Esophagus muscularis mucosa (tissue), 4 donors: ENCODE measurements at regions of chr4 and their contacts with region 1.

Region 1: GRCh38 chr4:173990126-173990868 is 293.2 kb downstream of the FBXO8 start:
- DNase-seq: no peak
- H3K4me3 ChIP-seq: no peak overlapping the region
- H3K27ac ChIP-seq: peak overlapping the region; percentile 30 to 57 (median 40)
- H3K4me1 ChIP-seq: peaks cover 0 to 22% (median 21%) of the 10 kb centered on the region in 4 donors
- H3K27me3 ChIP-seq: no peaks in the 10 kb centered on the region
- CTCF ChIP-seq: peak; percentile 62 to 73 (median 66)
- EP300 ChIP-seq: no peak
- POLR2A ChIP-seq: no peak

Region 2: GRCh38 chr4:173505924-173506518 is 484.3 kb before region 1 on chr4:
- intact Hi-C with region 1: loop called (anchors 5 kb)
- DNase-seq: peak; percentile 92
- H3K4me3 ChIP-seq: peak overlapping the region in 2 of 4 donors; percentile 20 to 41
- H3K27ac ChIP-seq: peak overlapping the region in 2 of 4 donors; percentile 34 to 43
- H3K4me1 ChIP-seq: peaks cover 17 to 64% (median 57%) of the 10 kb centered on the region in 4 donors
- H3K27me3 ChIP-seq: peaks cover 0 to 69% (median 0%) of the 10 kb centered on the region in 4 donors
- CTCF ChIP-seq: peak; percentile 73 to 83 (median 82)
- EP300 ChIP-seq: no peak
- POLR2A ChIP-seq: no peak

Region 3: DNA sequence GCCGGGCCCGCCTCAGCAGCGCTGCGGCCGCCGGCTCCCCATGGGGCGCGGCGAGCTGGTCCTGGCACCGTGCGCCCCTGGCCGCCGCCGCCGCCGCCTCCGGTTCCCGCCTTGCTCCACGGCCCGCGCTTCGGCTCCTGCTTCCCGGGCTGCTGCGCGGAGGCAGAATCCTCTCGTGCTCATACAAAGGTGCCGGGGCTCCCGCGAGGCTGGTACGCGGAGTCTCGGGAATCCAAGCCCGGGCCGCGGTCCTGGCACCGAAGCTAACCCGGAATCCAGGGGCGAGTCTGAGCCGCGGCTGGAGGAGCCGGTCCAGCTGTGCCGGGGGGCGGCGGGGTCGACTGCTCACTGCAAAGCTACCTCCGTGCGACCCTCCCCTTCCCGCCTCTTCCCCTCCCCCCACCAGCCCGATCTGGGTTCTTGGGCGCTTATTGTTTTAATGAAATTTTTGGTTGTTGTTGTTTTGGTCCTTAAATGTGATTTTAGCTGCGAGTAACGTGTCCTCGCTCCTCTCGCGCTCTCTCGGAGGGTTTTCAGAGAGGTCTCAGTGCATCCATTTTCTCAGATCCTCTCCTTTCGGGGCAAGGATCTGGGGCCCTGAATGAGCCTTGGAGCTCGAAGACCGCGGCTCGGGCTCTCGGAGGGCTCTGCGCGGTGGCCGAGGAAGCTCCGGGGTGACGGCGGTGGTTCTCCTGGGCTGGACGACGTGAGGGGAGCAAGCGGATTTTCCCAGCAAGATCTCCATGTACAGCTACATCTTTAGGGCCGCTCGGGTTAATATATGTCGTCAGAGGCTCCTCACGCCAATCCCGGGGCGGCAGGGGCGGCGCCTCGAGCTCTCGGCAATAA is 460.6 kb before region 1 on chr4 and contains the start of gene HAND2:
- intact Hi-C with region 1: loop called (anchors 10 kb)
- DNase-seq: no peak
- H3K4me3 ChIP-seq: peak within 1 kb of the TSS; percentile 82 to 90 (median 88)
- H3K27ac ChIP-seq: peak within 1 kb of the TSS; percentile 96 to 98 (median 98)
- H3K4me1 ChIP-seq: peaks cover 3 to 58% (median 38%) of the 10 kb centered on the region in 4 donors
- H3K27me3 ChIP-seq: peaks cover 0 to 54% (median 2%) of the 10 kb centered on the region in 4 donors
- CTCF ChIP-seq: no peak
- EP300 ChIP-seq: no peak
- POLR2A ChIP-seq: peak; percentile 81
- total RNA-seq, gene HAND2: 77.7 to 165 (median 138) TPM

Region 4: GRCh38 chr4:173758132-173758531 is 232.2 kb before region 1 on chr4:
- intact Hi-C with region 1: loop called (anchors 5 kb)
- DNase-seq: no peak
- H3K4me3 ChIP-seq: no peak overlapping the region
- H3K27ac ChIP-seq: no peak overlapping the region
- H3K4me1 ChIP-seq: peaks cover 3 to 21% (median 12%) of the 10 kb centered on the region in 4 donors
- H3K27me3 ChIP-seq: no peaks in the 10 kb centered on the region
- CTCF ChIP-seq: no peak
- EP300 ChIP-seq: no peak
- POLR2A ChIP-seq: no peak

Region 5: DNA sequence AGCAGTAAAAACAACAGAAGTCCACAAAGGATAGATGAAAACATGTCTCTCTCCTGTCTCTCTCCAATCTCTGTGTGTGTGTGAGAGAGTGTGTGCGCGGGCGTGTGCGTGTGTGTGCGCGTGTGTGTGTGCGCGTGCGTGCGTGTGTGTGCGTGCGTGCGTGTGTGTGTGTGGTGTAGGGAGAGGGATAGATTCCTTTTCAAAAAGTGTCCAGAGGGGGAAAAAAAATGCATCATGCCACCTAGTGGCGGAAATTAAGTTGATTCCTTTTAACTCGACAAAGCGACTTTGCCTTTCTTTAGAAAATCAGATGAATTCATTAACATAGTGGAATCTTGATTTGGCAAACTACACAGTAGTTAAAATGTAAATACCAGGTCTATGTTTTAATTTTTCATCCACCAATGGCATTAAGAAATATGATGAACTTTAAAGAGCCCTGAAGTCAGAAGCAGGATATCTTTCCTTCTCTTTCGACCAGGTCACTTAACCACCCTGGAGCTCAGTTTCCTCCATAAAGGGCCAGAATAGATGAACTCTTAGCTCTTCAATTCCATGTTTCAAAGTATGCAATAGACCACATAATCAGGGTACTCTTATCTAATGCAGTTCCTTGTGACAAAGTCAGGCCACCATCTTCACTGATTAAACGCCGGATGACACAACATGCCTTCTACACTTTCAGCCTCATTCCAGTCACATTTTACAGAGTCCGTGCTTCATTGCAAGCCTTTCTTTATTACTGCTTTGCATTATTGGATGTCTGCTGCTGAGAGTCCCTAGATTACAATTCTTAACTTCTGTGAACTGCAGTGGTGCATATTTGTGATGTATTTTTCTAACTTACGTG is 130.4 kb after region 1 on chr4:
- intact Hi-C with region 1: loop called (anchors 5 kb)
- DNase-seq: no peak
- H3K4me3 ChIP-seq: peak overlapping the region; percentile 45 to 58 (median 56)
- H3K27ac ChIP-seq: peak overlapping the region; percentile 67 to 77 (median 75)
- H3K4me1 ChIP-seq: peaks cover 12 to 48% (median 44%) of the 10 kb centered on the region in 4 donors
- H3K27me3 ChIP-seq: no peaks in the 10 kb centered on the region
- CTCF ChIP-seq: peak; percentile 60 to 66 (median 65)
- EP300 ChIP-seq: no peak
- POLR2A ChIP-seq: no peak

Region 6: DNA sequence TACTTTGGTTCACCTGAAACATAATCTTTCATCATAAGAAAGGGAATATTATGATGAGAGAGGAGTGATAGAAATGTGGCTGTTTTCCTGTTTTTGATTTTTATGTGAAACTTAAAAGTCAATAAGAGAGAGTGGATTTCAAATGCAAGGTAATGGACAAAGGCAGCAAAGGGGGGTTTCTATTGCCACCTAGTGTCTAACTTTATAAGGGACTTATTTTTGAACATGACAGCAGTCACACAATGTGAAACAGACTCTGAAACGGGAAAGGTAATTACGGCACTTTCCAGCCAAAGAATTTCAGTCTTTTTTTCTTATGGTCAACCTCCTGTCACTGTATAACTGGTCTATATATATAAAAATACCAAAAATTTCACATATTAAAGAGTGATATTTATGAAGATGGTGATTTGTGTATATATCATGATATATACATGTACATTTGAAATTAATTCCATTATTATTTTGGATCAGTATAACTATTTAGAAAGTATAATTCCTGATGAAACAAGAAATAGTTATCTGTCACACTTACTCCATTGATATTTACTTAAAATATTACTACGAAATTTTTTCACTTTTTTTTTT is 166.0 kb after region 1 on chr4:
- intact Hi-C with region 1: loop called (anchors 2 kb)
- DNase-seq: no peak
- H3K4me3 ChIP-seq: peak overlapping the region in 2 of 4 donors; percentile 3
- H3K27ac ChIP-seq: peak overlapping the region in 2 of 4 donors; percentile 48 to 60
- H3K4me1 ChIP-seq: peaks cover 12 to 39% (median 36%) of the 10 kb centered on the region in 4 donors
- H3K27me3 ChIP-seq: no peaks in the 10 kb centered on the region
- CTCF ChIP-seq: peak; percentile 55 to 73 (median 73)
- EP300 ChIP-seq: no peak
- POLR2A ChIP-seq: no peak